GM12878 (cell line): ENCODE measurements at regions of chr3 and their contacts with region 1.

Region 1: DNA sequence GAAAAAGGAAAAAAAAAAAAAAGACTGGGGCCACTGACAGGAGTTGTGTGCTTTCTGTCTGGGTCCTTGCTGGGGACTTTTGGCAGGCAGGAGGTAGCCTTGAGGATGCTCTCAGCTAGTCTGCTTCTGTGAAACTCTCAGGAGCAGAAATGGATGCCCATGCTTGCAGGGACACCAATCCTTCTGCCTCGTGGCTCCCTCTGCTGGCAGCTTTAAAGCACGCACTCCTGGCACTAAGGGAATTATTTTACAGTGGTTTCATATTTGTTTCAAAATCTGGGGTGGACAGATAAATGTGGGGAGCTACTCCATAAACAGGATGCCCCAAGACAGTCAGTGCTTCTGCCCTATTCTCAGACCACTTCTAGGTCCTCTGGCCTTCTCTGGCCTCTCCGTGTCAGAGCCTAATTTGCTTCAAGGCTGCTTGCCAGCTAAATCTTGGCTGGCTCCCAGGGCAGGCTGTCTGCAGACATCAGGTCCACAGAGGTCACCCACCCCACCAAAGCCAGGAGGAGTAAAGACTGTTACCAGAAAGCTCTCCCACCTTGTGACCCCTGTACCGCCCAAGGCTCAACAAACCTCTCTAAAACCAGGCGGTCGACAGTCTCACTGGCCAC is 17.1 kb downstream of the TRAIP start:
- DNase-seq: peak; percentile 23
- ATAC-seq: peak; percentile 99
- H3K4me3 ChIP-seq: no peak overlapping the region
- H3K27ac ChIP-seq: no peak overlapping the region
- H3K4me1 ChIP-seq: no peaks in the 10 kb centered on the region
- H3K27me3 ChIP-seq: no peaks in the 10 kb centered on the region
- CTCF ChIP-seq: peak; percentile 84 to 96 (median 89)
- EP300 ChIP-seq: no peak
- POLR2A ChIP-seq: no peak
- RAD21 ChIP-seq: peak; percentile 96

Region 2: DNA sequence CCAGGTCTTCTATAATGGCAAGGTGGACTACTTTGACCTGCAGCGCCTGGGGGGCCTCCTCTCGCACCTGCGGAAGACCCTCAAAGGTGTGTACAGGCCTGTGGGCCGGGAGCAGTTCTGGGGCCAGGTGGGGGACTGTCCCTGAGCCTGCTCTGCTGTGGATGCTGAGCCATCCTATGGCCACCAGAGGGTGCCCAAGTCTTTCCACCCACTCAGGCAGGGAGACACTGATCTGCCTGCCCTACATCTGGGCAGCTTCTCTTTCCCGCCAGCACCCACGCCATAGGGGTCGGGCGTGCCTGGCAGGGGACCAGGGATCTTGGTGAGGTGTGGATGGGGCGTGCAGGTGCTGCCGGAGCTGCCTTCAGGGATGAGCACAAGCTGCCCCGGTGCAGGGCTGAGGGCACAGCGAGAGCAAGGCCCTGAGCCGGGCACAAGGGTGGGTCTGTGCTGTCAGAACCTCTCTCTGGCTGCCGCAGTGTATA is 135.8 kb before region 1 on chr3:
- CTCF ChIA-PET with region 1: interaction called, 19 read pairs
- POLR2A ChIA-PET with region 1: no interaction called
- RAD21 ChIA-PET with region 1: interaction called, 3 read pairs
- SMC1A ChIA-PET with region 1: interaction called, 5 read pairs
- in situ Hi-C with region 1: no loop called
- intact Hi-C with region 1: loop called (anchors 1 kb)
- DNase-seq: no peak
- ATAC-seq: peak; percentile 99
- H3K4me3 ChIP-seq: no peak overlapping the region
- H3K27ac ChIP-seq: no peak overlapping the region
- H3K4me1 ChIP-seq: no peaks in the 10 kb centered on the region
- H3K27me3 ChIP-seq: no peaks in the 10 kb centered on the region
- CTCF ChIP-seq: peak; percentile 85 to 96 (median 90); a peak in 5 of 6 replicates
- EP300 ChIP-seq: no peak
- POLR2A ChIP-seq: no peak
- RAD21 ChIP-seq: peak; percentile 71

Region 3: DNA sequence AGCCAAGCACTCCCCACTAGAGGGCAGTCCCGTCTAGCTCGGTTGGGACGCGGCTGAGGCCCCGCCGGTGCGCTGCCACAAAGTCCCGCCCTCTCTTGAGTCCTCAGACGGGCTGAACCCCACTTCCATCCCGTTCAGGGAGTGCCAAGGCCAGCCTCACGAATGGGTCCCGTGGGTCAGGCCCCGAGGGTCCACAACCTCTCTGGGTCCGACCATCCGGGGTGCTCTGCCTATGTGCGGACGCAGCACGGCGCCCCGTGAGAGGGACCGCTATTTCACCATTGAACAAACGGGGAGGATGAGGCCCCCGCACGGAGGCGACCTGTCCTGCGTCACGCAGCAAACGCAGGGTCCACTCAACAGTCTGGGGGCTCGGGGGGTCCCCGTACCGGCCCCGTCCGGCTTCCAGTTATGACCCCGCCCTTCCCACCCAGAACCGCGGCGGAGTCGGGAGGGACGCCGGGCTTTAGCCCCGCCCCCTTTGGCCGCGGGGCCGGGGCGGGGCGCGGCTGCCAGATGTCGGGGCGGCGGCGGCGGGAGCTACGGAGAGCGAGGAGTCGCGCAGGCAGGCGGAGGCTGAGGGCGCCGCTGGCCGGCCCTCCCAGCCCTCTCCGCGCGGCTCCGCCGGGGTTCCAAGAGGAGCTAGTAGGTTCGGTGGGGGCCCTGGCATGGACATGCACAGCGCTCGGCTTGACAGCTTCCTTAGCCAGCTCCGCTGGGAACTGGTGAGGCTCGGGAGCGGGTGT is 36.4 kb before region 1 on chr3 and contains the start of gene INKA1:
- CTCF ChIA-PET with region 1: interaction called, 327 read pairs
- POLR2A ChIA-PET with region 1: interaction called, 21 read pairs
- RAD21 ChIA-PET with region 1: interaction called, 182 read pairs
- SMC1A ChIA-PET with region 1: interaction called, 146 read pairs
- in situ Hi-C with region 1: no loop called
- intact Hi-C with region 1: loop called (anchors 1 kb)
- DNase-seq: no peak
- ATAC-seq: peak; percentile 81
- H3K4me3 ChIP-seq: peak within 1 kb of the TSS; percentile 98
- H3K27ac ChIP-seq: peak within 1 kb of the TSS; percentile 37; the same call in 1 of the 2 replicates
- H3K4me1 ChIP-seq: peaks cover 39% of the 10 kb centered on the region
- H3K27me3 ChIP-seq: no peaks in the 10 kb centered on the region; a peak in 1 of 4 replicates
- CTCF ChIP-seq: peak; percentile 88 to 97 (median 93); a peak in 5 of 6 replicates
- EP300 ChIP-seq: no peak
- POLR2A ChIP-seq: peak; percentile 39; the same call in 1 of the 2 replicates
- RAD21 ChIP-seq: peak; percentile 81
- polyA plus RNA-seq, gene INKA1: 0.32 to 1.4 TPM

Region 4: GRCh38 chr3:49856181-49857005 is 17.1 kb after region 1 on chr3 and contains the start of gene TRAIP:
- CTCF ChIA-PET with region 1: interaction called, 26 read pairs
- POLR2A ChIA-PET with region 1: interaction called, 5 read pairs
- RAD21 ChIA-PET with region 1: no interaction called
- SMC1A ChIA-PET with region 1: interaction called, 3 read pairs
- in situ Hi-C with region 1: no loop called
- intact Hi-C with region 1: no loop called
- DNase-seq: peak; percentile 89
- ATAC-seq: peak; percentile 99
- H3K4me3 ChIP-seq: peak within 1 kb of the TSS; percentile 99
- H3K27ac ChIP-seq: peak within 1 kb of the TSS; percentile 36
- H3K4me1 ChIP-seq: no peaks in the 10 kb centered on the region
- H3K27me3 ChIP-seq: no peaks in the 10 kb centered on the region
- CTCF ChIP-seq: peak in 1 of 3 experiments; percentile 17; a peak in 1 of 6 replicates
- EP300 ChIP-seq: no peak
- POLR2A ChIP-seq: peak; percentile 79
- RAD21 ChIP-seq: no peak
- polyA plus RNA-seq, gene TRAIP: 33.6 to 37.0 TPM

Region 5: DNA sequence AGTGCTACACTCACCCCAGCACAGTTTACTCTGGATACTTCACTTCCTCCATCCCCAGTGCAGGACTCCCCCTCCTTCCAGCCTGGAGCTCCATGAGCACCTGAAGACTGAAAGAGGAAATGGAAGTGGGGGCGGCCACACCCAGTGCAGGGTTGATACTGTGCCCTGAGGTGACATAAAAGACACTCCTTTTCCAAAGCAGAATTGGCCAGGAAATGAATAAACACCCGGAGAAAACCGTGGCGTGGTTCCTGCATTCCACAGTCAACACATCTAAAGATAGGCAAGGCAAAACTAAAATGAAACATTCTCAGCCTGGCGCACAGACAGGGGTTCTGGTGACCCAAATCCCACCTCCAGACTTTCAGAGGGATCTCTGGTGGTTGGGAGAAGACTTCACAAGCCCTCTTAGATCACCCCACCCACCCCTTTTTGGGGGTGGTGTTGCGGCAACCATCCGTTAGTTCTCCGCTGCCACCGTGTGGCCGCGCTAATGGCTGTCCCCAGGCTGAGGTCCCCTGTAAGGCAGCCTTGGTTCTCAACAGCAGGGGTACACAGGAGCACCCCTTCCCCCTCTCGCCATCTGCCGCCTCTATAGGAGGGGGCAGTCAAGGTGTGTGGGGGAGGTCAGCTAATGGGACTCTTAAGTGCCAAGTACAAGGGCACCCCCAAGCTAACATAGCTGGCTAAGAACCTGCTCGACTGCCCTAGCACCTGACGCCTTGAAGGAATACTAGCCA is 66.9 kb after region 1 on chr3:
- CTCF ChIA-PET with region 1: interaction called, 70 read pairs
- POLR2A ChIA-PET with region 1: interaction called, 3 read pairs
- RAD21 ChIA-PET with region 1: interaction called, 19 read pairs
- SMC1A ChIA-PET with region 1: interaction called, 13 read pairs
- in situ Hi-C with region 1: no loop called
- intact Hi-C with region 1: loop called (anchors 1 kb)
- DNase-seq: no peak
- ATAC-seq: peak; percentile 72
- H3K4me3 ChIP-seq: 0 out of 2 replicates have a peak overlapping the region, but pooled peaks have one; percentile 3
- H3K27ac ChIP-seq: peak overlapping the region; percentile 46
- H3K4me1 ChIP-seq: peaks cover 25% of the 10 kb centered on the region
- H3K27me3 ChIP-seq: no peaks in the 10 kb centered on the region
- CTCF ChIP-seq: peak; percentile 66 to 77 (median 71); a peak in 5 of 6 replicates
- EP300 ChIP-seq: no peak
- POLR2A ChIP-seq: no peak
- RAD21 ChIP-seq: peak; percentile 72